Stomach (tissue), 19 donors: ENCODE measurements at regions of chr11 and their contacts with region 1.

Region 1: GRCh38 chr11:36564376-36565030 is 3.3 kb upstream of the RAG1 start:
- DNase-seq: peak; percentile 58 to 88
- H3K4me3 ChIP-seq: peak overlapping the region; percentile 32 to 44 (median 40)
- H3K27ac ChIP-seq: no peak overlapping the region
- H3K4me1 ChIP-seq: peaks cover 0 to 9% (median 3%) of the 10 kb centered on the region in 4 donors
- H3K27me3 ChIP-seq: no peaks in the 10 kb centered on the region
- CTCF ChIP-seq: peak in 5 of 7 experiments; percentile 37 to 61 (median 53)
- EP300 ChIP-seq: no peak
- POLR2A ChIP-seq: no peak

Region 2: GRCh38 chr11:36077886-36078685 is 486.4 kb before region 1 on chr11:
- intact Hi-C with region 1: no loop called
- DNase-seq: no peak
- H3K4me3 ChIP-seq: no peak overlapping the region
- H3K27ac ChIP-seq: no peak overlapping the region
- H3K4me1 ChIP-seq: peaks cover 0 to 12% (median 8%) of the 10 kb centered on the region in 4 donors
- H3K27me3 ChIP-seq: no peaks in the 10 kb centered on the region
- CTCF ChIP-seq: no peak
- EP300 ChIP-seq: no peak
- POLR2A ChIP-seq: no peak

Region 3: DNA sequence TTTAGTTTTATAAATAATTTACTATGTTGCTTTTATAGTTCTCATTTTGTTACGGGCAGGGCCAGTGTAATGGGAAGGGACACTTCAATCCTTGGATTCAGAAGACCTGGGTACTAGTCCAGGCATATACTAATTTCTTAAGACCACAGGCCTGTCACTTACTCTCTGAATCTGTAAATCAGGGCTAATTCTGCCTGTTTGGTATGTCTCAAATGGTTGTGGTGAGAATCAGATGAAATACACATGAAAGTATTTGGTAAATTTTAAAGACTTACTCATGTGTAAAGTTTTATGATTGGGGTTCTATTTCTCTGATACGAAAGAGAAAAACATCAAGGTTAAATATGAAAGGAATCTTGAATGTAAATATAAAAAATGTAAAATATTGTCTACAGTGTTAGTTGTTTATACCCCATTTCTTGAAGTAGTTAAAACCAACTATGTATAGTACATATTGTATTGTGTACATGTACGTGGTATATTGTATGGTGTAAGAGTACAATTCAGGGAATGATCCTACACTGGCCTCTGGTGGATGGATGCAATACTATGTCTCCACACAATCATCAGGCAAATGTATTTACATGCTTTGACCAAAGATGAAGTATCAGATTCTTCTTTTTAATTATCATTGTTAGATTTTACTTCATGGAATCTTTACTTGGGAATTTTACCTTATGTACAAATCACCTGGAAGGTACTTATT is 58.1 kb after region 1 on chr11:
- intact Hi-C with region 1: loop called (anchors 10 kb)
- DNase-seq: peak in 1 of 2 donors; percentile 72
- H3K4me3 ChIP-seq: no peak overlapping the region
- H3K27ac ChIP-seq: no peak overlapping the region
- H3K4me1 ChIP-seq: peaks cover 0 to 19% (median 9%) of the 10 kb centered on the region in 4 donors
- H3K27me3 ChIP-seq: no peaks in the 10 kb centered on the region
- CTCF ChIP-seq: peak in 3 of 7 experiments; percentile 19 to 36 (median 30)
- EP300 ChIP-seq: no peak
- POLR2A ChIP-seq: no peak

Region 4: DNA sequence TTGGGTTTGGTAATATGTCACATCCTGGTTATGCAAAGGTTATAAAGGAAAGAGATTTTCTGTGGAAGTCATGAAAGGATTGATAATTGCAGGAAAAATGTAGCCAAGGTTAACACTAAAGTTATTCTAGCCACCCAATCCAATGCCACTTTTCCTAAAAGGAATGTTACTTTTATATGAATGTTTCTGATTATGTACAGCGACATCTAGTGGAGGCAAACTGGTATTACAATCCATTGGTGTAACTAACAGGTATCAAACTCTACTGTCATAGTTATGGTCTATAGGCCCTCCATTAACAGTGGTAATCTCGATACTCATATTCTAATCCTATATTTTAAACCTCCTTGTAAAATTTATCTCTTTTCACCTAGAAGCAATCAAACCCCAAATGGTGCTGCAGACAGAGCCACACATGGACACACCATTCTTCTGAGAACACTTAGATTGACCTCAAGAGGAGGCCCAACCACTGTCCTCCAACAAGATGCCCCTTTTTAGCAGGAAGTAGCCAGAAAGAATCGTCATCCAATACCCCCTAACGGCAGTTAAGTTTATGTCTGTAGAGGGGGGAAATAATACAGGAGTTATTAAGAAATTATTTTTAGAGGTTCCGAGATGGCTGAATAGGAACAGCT is 108.4 kb after region 1 on chr11:
- intact Hi-C with region 1: loop called (anchors 5 kb)
- DNase-seq: peak in 1 of 2 donors; percentile 34
- H3K4me3 ChIP-seq: no peak overlapping the region
- H3K27ac ChIP-seq: no peak overlapping the region
- H3K4me1 ChIP-seq: no peaks in the 10 kb centered on the region
- H3K27me3 ChIP-seq: no peaks in the 10 kb centered on the region
- CTCF ChIP-seq: peak in 5 of 7 experiments; percentile 65 to 87 (median 77)
- EP300 ChIP-seq: no peak
- POLR2A ChIP-seq: no peak